ENCODE measurements at regions of chr1 and their contacts with region 1.

Region 1: GRCh38 chr1:222634180-222635013 is 16.5 kb downstream of the MIA3 start:
- DNase-seq: peak; percentile 78
- H3K4me3 Mint-ChIP-seq: no peak overlapping the region
- H3K27ac Mint-ChIP-seq: peak overlapping the region; percentile 65
- H3K4me1 Mint-ChIP-seq: peaks cover 10% of the 10 kb centered on the region
- H3K27me3 Mint-ChIP-seq: no peaks in the 10 kb centered on the region

Region 2: DNA sequence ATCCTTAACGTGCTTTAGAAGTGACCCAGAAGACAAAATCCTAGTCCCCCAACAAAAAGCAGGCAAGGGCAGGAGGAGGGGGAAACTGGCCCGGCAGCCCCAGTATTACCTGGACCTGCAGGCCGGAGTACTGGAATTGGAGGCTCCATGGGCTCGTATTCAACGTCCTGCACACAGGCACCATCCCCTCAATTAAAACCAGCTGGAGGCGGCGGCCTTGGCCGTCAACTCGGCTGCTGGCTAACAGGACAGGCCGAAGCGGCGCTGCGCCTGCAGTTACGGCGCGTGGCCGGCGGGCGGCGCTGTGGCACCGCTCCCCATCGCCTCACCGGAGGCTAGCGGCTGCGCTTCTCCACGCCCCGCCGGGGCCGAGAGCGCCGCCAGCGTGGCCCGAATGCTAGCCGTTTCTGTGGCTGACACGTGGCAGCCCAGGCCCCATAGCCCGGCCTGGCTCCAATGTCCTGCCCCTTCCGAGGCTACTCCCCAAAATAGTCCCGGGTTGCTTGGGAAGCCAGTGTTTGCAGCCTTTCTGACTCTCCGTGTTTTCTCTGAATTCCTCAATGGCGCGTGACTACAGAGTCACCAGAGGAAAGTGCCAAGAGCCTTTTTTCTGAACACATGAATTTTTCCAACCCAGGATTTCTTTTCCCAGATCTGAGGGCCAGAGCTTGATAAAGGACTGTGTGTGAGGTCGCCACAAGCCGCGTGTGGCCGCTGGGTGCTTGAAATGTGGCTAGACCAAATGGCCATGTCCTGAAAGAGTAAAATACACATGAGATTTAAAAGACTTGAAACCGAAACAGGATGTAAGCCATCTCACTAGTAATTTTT is 169.0 kb before region 1 on chr1:
- CTCF ChIA-PET with region 1: interaction called, 31 read pairs
- DNase-seq: peak; percentile 78
- H3K4me3 Mint-ChIP-seq: peak overlapping the region; percentile 72
- H3K27ac Mint-ChIP-seq: peak overlapping the region; percentile 84
- H3K4me1 Mint-ChIP-seq: peaks cover 14% of the 10 kb centered on the region
- H3K27me3 Mint-ChIP-seq: peaks cover 12% of the 10 kb centered on the region

Region 3: DNA sequence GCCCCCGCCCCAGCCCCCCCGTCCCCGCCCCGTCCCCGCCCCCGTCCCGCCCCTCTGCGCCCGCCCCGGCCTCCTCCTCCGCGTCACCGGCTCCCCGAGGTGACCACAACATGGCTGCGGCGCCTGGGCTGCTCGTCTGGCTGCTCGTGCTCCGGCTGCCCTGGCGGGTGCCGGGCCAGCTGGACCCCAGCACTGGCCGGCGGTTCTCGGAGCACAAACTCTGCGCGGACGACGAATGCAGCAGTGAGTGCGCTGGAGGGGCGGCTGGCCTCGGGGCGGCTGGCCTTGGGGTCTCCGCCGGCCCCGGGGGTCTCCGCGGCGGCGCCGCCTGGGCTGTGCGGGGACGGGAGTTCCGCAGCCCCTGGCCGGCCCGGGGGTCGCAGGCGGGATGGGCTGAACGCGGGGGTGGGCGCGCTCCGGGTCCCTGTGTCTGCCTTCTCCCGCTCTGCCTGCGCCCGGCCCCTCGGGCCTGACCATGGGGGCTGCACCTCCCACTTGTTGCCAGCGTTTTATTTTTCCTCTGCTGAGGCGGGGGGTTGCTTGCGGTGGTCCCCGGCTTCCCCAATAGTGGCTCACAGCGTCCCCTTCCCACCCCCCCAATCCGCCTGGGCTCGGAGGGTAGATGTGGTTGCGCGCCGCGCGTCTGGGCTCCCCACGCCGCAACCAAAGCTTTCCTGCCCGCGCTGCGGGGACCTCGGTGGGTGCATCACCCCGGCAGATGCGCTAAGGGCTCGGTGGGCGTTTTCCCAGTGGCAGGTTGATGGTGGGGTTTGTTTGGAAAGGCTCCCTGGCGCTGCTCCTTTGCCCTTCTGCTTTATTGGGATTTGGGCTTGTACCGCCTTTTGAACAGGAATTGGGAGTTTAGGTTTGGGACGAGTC is 16.2 kb before region 1 on chr1 and contains the start of gene MIA3:
- CTCF ChIA-PET with region 1: interaction called, 16 read pairs
- DNase-seq: peak; percentile 87
- H3K4me3 Mint-ChIP-seq: peak within 1 kb of the TSS; percentile 83
- H3K27ac Mint-ChIP-seq: peak within 1 kb of the TSS; percentile 89
- H3K4me1 Mint-ChIP-seq: peaks cover 33% of the 10 kb centered on the region
- H3K27me3 Mint-ChIP-seq: peaks cover 23% of the 10 kb centered on the region

Region 4: DNA sequence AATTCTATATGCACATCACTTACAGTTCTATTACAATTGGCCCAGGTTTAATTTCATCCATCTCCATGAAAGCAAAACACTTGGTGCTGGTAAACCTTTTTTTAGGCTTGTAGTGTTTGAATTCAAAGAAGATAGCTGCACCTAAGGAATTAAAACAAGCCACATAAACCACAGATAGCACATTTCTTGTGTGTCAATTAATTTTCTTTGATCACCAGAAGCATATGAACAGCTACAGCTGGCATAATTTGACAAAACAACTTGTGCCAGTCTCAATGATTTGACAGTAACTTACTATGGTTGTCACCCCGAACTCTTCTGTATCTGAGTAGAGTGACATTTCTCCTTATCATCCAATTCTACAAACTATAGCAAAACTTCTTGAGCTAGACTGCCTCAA is 35.7 kb after region 1 on chr1:
- CTCF ChIA-PET with region 1: no interaction called
- DNase-seq: no peak
- H3K4me3 Mint-ChIP-seq: no peak overlapping the region
- H3K27ac Mint-ChIP-seq: peak overlapping the region; percentile 69
- H3K4me1 Mint-ChIP-seq: peaks cover 24% of the 10 kb centered on the region
- H3K27me3 Mint-ChIP-seq: no peaks in the 10 kb centered on the region

Region 5: GRCh38 chr1:222829868-222830267 is 195.5 kb after region 1 on chr1:
- CTCF ChIA-PET with region 1: no interaction called
- DNase-seq: no peak
- H3K4me3 Mint-ChIP-seq: no peak overlapping the region
- H3K27ac Mint-ChIP-seq: no peak overlapping the region
- H3K4me1 Mint-ChIP-seq: no peaks in the 10 kb centered on the region
- H3K27me3 Mint-ChIP-seq: no peaks in the 10 kb centered on the region

Measured in activated naive CD4-positive, alpha-beta T cell treated with anti-CD3 and anti-CD28 coated beads, Interleukin-2, amount 10 ng/mL, durations not matched to agents 7 days and 5 days (primary cell).